Mammary epithelial cell (primary cell): ENCODE measurements at regions of chr22 and their contacts with region 1.

Region 1: GRCh38 chr22:38353142-38353629 is 36.0 kb upstream of the CSNK1E start:
- DNase-seq: peak; percentile 52
- H3K4me3 ChIP-seq: no peak overlapping the region
- H3K27ac ChIP-seq: no peak overlapping the region
- H3K4me1 ChIP-seq: peaks cover 11% of the 10 kb centered on the region
- H3K27me3 ChIP-seq: no peaks in the 10 kb centered on the region
- CTCF ChIP-seq: peak; percentile 76 to 93

Region 2: GRCh38 chr22:38114484-38115398 is 238.4 kb before region 1 on chr22:
- CTCF ChIA-PET with region 1: no interaction called
- dilution Hi-C with region 1: no loop called
- in situ Hi-C with region 1: no loop called
- intact Hi-C with region 1: loop called (anchors 5 kb)
- DNase-seq: peak; percentile 67
- H3K4me3 ChIP-seq: no peak overlapping the region
- H3K27ac ChIP-seq: no peak overlapping the region
- H3K4me1 ChIP-seq: peaks cover 7% of the 10 kb centered on the region
- H3K27me3 ChIP-seq: no peaks in the 10 kb centered on the region
- CTCF ChIP-seq: peak; percentile 96 to 98

Region 3: GRCh38 chr22:38214256-38215056 is 138.7 kb before region 1 on chr22:
- CTCF ChIA-PET with region 1: interaction called, 7 read pairs
- dilution Hi-C with region 1: no loop called
- in situ Hi-C with region 1: no loop called
- intact Hi-C with region 1: loop called (anchors 5 kb)
- DNase-seq: no peak
- H3K4me3 ChIP-seq: no peak overlapping the region
- H3K27ac ChIP-seq: no peak overlapping the region
- H3K4me1 ChIP-seq: peaks cover 20% of the 10 kb centered on the region
- H3K27me3 ChIP-seq: no peaks in the 10 kb centered on the region
- CTCF ChIP-seq: no peak

Region 4: GRCh38 chr22:38262051-38262795 is 91.0 kb before region 1 on chr22:
- CTCF ChIA-PET with region 1: no interaction called
- dilution Hi-C with region 1: loop called (anchors 5 kb)
- in situ Hi-C with region 1: no loop called
- intact Hi-C with region 1: loop called (anchors 1 kb)
- DNase-seq: peak; percentile 81
- H3K4me3 ChIP-seq: no peak overlapping the region
- H3K27ac ChIP-seq: no peak overlapping the region
- H3K4me1 ChIP-seq: peaks cover 15% of the 10 kb centered on the region
- H3K27me3 ChIP-seq: no peaks in the 10 kb centered on the region
- CTCF ChIP-seq: peak; percentile 51 to 85

Region 5: DNA sequence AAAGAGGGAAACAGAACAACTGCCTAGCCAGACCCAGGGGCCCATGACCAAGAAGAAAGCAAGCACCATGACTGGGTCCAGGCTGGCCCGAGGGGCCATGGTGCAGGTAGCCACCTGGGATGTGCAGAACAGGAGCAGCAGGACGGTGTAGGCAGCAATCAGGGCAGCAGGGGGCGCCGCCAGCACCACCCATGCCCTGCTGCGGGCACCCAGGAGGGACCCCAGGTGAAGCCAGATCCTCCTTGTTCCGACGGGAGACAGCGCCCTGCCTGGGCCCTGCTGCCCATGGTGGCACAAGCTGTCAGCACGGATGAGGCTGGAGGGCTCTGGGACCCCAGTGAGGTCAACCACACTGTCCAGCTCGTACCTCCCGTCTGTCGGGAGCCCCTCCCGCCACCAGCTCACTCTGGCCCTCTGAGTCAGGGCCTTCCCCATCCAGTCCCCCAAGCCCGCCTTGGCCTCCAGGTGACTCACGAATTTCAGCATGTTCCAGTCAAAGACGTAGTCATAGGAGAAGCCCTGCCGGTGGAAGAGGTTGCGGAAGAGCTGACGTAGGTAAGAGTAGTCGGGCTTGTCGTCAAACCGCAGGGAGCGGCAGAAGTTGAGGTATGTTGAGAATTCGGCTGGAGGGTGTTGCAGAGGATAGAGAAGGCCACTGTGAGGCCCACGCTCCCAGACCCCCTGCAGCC is 54.7 kb before region 1 on chr22:
- CTCF ChIA-PET with region 1: no interaction called
- dilution Hi-C with region 1: no loop called
- in situ Hi-C with region 1: loop called in 1 of 2 experiments (anchors 5 kb)
- intact Hi-C with region 1: loop called (anchors 1 kb)
- DNase-seq: peak; percentile 100
- H3K4me3 ChIP-seq: no peak overlapping the region
- H3K27ac ChIP-seq: peak overlapping the region; percentile 93
- H3K4me1 ChIP-seq: peaks cover 55% of the 10 kb centered on the region
- H3K27me3 ChIP-seq: no peaks in the 10 kb centered on the region
- CTCF ChIP-seq: peak; percentile 59

Region 6: GRCh38 chr22:38305471-38306448 is 47.4 kb before region 1 on chr22:
- CTCF ChIA-PET with region 1: no interaction called
- dilution Hi-C with region 1: loop called (anchors 5 kb)
- in situ Hi-C with region 1: no loop called
- intact Hi-C with region 1: loop called (anchors 1 kb)
- DNase-seq: peak; percentile 63
- H3K4me3 ChIP-seq: no peak overlapping the region
- H3K27ac ChIP-seq: peak overlapping the region; percentile 85
- H3K4me1 ChIP-seq: peaks cover 53% of the 10 kb centered on the region
- H3K27me3 ChIP-seq: no peaks in the 10 kb centered on the region
- CTCF ChIP-seq: peak in 1 of 2 donors; percentile 27